ENCODE measurements at regions of chr7 and their contacts with region 1.

Region 1: DNA sequence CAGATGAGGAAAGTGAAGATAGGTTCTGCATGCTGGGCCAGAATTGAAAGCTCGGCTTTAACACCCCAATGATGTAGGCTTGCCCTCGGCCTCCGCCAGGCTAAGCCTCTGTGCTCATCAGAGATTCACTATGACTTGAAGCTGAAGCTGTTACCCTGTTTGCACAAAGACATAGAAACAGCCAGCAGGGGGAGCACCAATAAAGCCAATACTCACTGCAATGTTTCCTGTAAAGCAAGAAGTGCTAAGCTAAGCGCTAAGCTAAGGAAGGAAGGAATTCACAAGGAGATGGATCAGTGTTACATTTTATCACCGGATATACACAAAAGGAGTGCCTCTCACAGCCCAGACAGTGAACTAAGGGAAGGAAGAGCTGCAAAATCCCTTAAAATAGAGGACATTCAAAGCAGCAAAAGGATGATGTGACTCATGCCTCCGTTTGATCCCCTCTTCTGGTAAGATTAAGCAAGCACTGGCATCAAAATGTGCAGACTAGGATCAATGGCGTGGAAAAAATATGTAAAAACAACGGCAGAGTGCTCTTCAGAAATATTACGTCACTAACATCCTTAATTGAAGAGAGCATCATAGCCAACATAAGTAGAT is 153.8 kb downstream of the COBL start:
- DNase-seq: peak in 4 of 5 donors; percentile 61 to 74 (median 68)
- ATAC-seq: peak; percentile 68 to 90 (median 86)
- H3K4me3 ChIP-seq: no peak overlapping the region
- H3K27ac ChIP-seq: no peak overlapping the region
- H3K4me1 ChIP-seq: peaks cover 0 to 17% (median 2%) of the 10 kb centered on the region in 12 donors
- H3K27me3 ChIP-seq: peaks cover 0 to 7% (median 0%) of the 10 kb centered on the region in 9 donors
- CTCF ChIP-seq: peak; percentile 72 to 88 (median 78)
- POLR2A ChIP-seq: no peak

Region 2: DNA sequence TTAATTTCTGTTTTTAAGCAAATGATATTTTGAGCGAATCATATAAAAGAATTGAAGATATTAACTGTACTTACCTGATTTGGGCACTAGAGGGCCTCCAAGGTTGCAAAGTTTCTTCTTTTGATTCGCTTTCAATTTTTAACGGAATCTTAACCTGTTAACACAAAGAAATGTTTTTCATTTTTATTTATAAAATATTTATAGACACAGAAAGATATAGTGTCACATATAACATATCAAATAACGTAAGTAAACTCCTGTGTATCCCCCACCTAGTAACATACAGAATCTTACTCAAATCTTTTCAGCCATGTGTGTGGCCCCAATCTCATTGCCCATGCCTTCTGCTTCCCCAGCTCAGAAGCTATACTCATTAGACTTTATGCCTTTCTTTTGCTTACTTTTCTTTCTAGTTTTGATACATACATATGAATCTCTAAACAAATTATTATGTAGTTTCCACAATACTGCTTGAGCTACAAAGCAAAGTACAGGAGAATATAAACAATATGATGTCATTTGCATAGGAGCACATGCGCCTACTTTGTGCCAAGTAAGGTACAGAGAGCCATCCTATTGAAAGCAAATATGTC is 1020.3 kb before region 1 on chr7:
- intact Hi-C with region 1: loop called in 3 of 10 experiments (anchors 5 to 10 kb)
- DNase-seq: no peak
- ATAC-seq: no peak
- H3K4me3 ChIP-seq: no peak overlapping the region
- H3K27ac ChIP-seq: no peak overlapping the region
- H3K4me1 ChIP-seq: peaks cover 0 to 4% (median 0%) of the 10 kb centered on the region in 12 donors
- H3K27me3 ChIP-seq: peaks cover 0 to 9% (median 0%) of the 10 kb centered on the region in 9 donors
- CTCF ChIP-seq: peak; percentile 54 to 81 (median 72)
- POLR2A ChIP-seq: no peak

Region 3: GRCh38 chr7:50449881-50450589 is 712.8 kb before region 1 on chr7 and contains the start of gene FIGNL1:
- intact Hi-C with region 1: loop called in 1 of 10 experiments (anchors 5 kb)
- DNase-seq: peak; percentile 77 to 88 (median 82)
- ATAC-seq: peak; percentile 94 to 99 (median 98)
- H3K4me3 ChIP-seq: peak within 1 kb of the TSS; percentile 42 to 95 (median 72)
- H3K27ac ChIP-seq: peak within 1 kb of the TSS in 10 of 12 donors; percentile 15 to 81 (median 62)
- H3K4me1 ChIP-seq: peaks cover 0 to 21% (median 10%) of the 10 kb centered on the region in 12 donors
- H3K27me3 ChIP-seq: no peaks in the 10 kb centered on the region
- CTCF ChIP-seq: no peak
- POLR2A ChIP-seq: peak in 1 of 2 donors; percentile 65
- total RNA-seq, gene FIGNL1: 2.9 to 5.8 (median 5.1) TPM

Region 4: DNA sequence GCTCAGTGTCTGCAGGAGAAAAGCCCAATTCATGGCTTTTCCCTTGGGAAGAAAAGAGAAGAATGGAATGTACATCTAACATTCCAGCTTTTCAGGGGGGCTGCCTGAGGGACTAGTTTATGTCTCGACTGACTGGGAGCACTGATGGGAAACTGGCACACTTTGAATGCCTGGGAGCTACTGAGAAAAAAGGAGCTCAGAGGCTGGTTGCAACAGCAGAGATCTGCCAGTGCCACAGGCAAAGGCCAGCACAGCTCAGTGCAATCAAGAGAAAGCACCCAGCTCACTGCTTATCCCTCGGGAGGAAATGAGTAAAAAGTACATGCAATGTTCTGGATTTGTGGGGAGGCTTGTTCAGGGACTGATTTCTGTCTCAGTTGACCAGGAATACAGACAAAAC is 72.4 kb before region 1 on chr7:
- intact Hi-C with region 1: no loop called
- DNase-seq: no peak
- ATAC-seq: no peak
- H3K4me3 ChIP-seq: no peak overlapping the region
- H3K27ac ChIP-seq: no peak overlapping the region
- H3K4me1 ChIP-seq: peaks cover 0 to 9% (median 0%) of the 10 kb centered on the region in 12 donors
- H3K27me3 ChIP-seq: no peaks in the 10 kb centered on the region
- CTCF ChIP-seq: no peak
- POLR2A ChIP-seq: no peak

Region 5: GRCh38 chr7:51357821-51358220 is 195.0 kb after region 1 on chr7:
- intact Hi-C with region 1: loop called in 1 of 10 experiments (anchors 5 kb)
- DNase-seq: no peak
- ATAC-seq: no peak
- H3K4me3 ChIP-seq: no peak overlapping the region
- H3K27ac ChIP-seq: peak overlapping the region in 6 of 12 donors; percentile 42 to 70 (median 62)
- H3K4me1 ChIP-seq: peaks cover 0 to 10% (median 0%) of the 10 kb centered on the region in 12 donors
- H3K27me3 ChIP-seq: no peaks in the 10 kb centered on the region
- CTCF ChIP-seq: peak in 5 of 12 donors; percentile 10 to 33 (median 14)
- POLR2A ChIP-seq: no peak

Measured in heart left ventricle (tissue), 16 donors.